Transverse colon (tissue), 4 donors: ENCODE measurements at regions of chr17 and their contacts with region 1.

Region 1: GRCh38 chr17:74864866-74865395 is 5.2 kb upstream of the GRIN2C start:
- DNase-seq: peak; percentile 79
- H3K4me3 ChIP-seq: no peak overlapping the region
- H3K27ac ChIP-seq: no peak overlapping the region
- H3K4me1 ChIP-seq: peaks cover 12 to 23% (median 22%) of the 10 kb centered on the region in 4 donors
- H3K27me3 ChIP-seq: peaks cover 25% of the 10 kb centered on the region
- CTCF ChIP-seq: peak; percentile 96 to 98 (median 97)
- EP300 ChIP-seq: no peak
- POLR2A ChIP-seq: no peak

Region 2: GRCh38 chr17:74748529-74749365 is 116.2 kb before region 1 on chr17 and contains the start of gene NHERF1:
- in situ Hi-C with region 1: loop called in 2 of 4 experiments (anchors 25 kb)
- intact Hi-C with region 1: loop called (anchors 2 kb)
- DNase-seq: peak; percentile 96
- H3K4me3 ChIP-seq: peak within 1 kb of the TSS; percentile 80 to 94 (median 88)
- H3K27ac ChIP-seq: peak within 1 kb of the TSS; percentile 90 to 93 (median 91)
- H3K4me1 ChIP-seq: peaks cover 13 to 77% (median 43%) of the 10 kb centered on the region in 4 donors
- H3K27me3 ChIP-seq: no peaks in the 10 kb centered on the region
- CTCF ChIP-seq: peak in 1 of 5 experiments; percentile 37
- EP300 ChIP-seq: no peak
- POLR2A ChIP-seq: peak; percentile 97
- total RNA-seq, gene NHERF1: 118 to 463 (median 233) TPM

Region 3: GRCh38 chr17:74790161-74791054 is 74.5 kb before region 1 on chr17:
- in situ Hi-C with region 1: loop called in 2 of 4 experiments (anchors 5 to 10 kb)
- intact Hi-C with region 1: loop called (anchors 2 kb)
- DNase-seq: no peak
- H3K4me3 ChIP-seq: no peak overlapping the region
- H3K27ac ChIP-seq: no peak overlapping the region
- H3K4me1 ChIP-seq: peaks cover 0 to 5% (median 0%) of the 10 kb centered on the region in 4 donors
- H3K27me3 ChIP-seq: no peaks in the 10 kb centered on the region
- CTCF ChIP-seq: no peak
- EP300 ChIP-seq: no peak
- POLR2A ChIP-seq: no peak

Region 4: GRCh38 chr17:74798239-74798707 is 66.7 kb before region 1 on chr17:
- in situ Hi-C with region 1: loop called in 2 of 4 experiments (anchors 5 to 10 kb)
- intact Hi-C with region 1: no loop called
- DNase-seq: no peak
- H3K4me3 ChIP-seq: no peak overlapping the region
- H3K27ac ChIP-seq: no peak overlapping the region
- H3K4me1 ChIP-seq: no peaks in the 10 kb centered on the region
- H3K27me3 ChIP-seq: no peaks in the 10 kb centered on the region
- CTCF ChIP-seq: no peak
- EP300 ChIP-seq: no peak
- POLR2A ChIP-seq: no peak

Region 5: GRCh38 chr17:75163074-75163473 is 298.1 kb after region 1 on chr17:
- in situ Hi-C with region 1: no loop called
- intact Hi-C with region 1: no loop called
- DNase-seq: no peak
- H3K4me3 ChIP-seq: no peak overlapping the region
- H3K27ac ChIP-seq: no peak overlapping the region
- H3K4me1 ChIP-seq: no peaks in the 10 kb centered on the region
- H3K27me3 ChIP-seq: no peaks in the 10 kb centered on the region
- CTCF ChIP-seq: no peak
- EP300 ChIP-seq: no peak
- POLR2A ChIP-seq: no peak